Ovary (tissue), 10 donors: ENCODE measurements at regions of chr10 and their contacts with region 1.

Region 1: GRCh38 chr10:97921581-97922021 is 72.0 kb downstream of the GOLGA7B start:
- DNase-seq: no peak
- H3K4me3 ChIP-seq: no peak overlapping the region
- H3K27ac ChIP-seq: no peak overlapping the region
- H3K4me1 ChIP-seq: no peaks in the 10 kb centered on the region
- H3K27me3 ChIP-seq: no peaks in the 10 kb centered on the region
- CTCF ChIP-seq: no peak
- EP300 ChIP-seq: no peak
- POLR2A ChIP-seq: no peak

Region 2: GRCh38 chr10:98045785-98046389 is 124.3 kb after region 1 on chr10:
- intact Hi-C with region 1: loop called in 1 of 4 experiments (anchors 10 kb)
- DNase-seq: peak in 4 of 5 donors; percentile 14 to 47 (median 26)
- H3K4me3 ChIP-seq: no peak overlapping the region
- H3K27ac ChIP-seq: no peak overlapping the region
- H3K4me1 ChIP-seq: no peaks in the 10 kb centered on the region
- H3K27me3 ChIP-seq: no peaks in the 10 kb centered on the region
- CTCF ChIP-seq: peak in 2 of 3 donors; percentile 31 to 39
- EP300 ChIP-seq: no peak
- POLR2A ChIP-seq: no peak